ENCODE measurements at regions of chr4 and their contacts with region 1.

Region 1: GRCh38 chr4:90403781-90404180 is 276.6 kb downstream of the CCSER1 start:
- DNase-seq: no peak
- H3K4me3 ChIP-seq: no peak overlapping the region
- H3K27ac ChIP-seq: no peak overlapping the region
- H3K4me1 ChIP-seq: no peaks in the 10 kb centered on the region
- H3K27me3 ChIP-seq: no peaks in the 10 kb centered on the region
- CTCF ChIP-seq: no peak
- EP300 ChIP-seq: no peak
- RAD21 ChIP-seq: no peak

Region 2: GRCh38 chr4:90357117-90357710 is 46.6 kb before region 1 on chr4:
- CTCF ChIA-PET with region 1: no interaction called
- POLR2A ChIA-PET with region 1: no interaction called
- DNase-seq: peak; percentile 47
- H3K4me3 ChIP-seq: peak overlapping the region in 1 of 2 experiments; percentile 9; a peak in 1 of 4 replicates
- H3K27ac ChIP-seq: no peak overlapping the region
- H3K4me1 ChIP-seq: no peaks in the 10 kb centered on the region; a peak in 1 of 4 replicates
- H3K27me3 ChIP-seq: no peaks in the 10 kb centered on the region
- CTCF ChIP-seq: peak; percentile 78
- EP300 ChIP-seq: no peak
- RAD21 ChIP-seq: peak; percentile 94

Region 3: GRCh38 chr4:90419124-90419711 is 15.4 kb after region 1 on chr4:
- CTCF ChIA-PET with region 1: interaction called, 18 read pairs
- POLR2A ChIA-PET with region 1: no interaction called
- DNase-seq: peak; percentile 52
- H3K4me3 ChIP-seq: peak overlapping the region in 1 of 2 experiments; percentile 3; a peak in 1 of 4 replicates
- H3K27ac ChIP-seq: no peak overlapping the region
- H3K4me1 ChIP-seq: no peaks in the 10 kb centered on the region; a peak in 1 of 4 replicates
- H3K27me3 ChIP-seq: no peaks in the 10 kb centered on the region
- CTCF ChIP-seq: peak; percentile 77
- EP300 ChIP-seq: no peak
- RAD21 ChIP-seq: peak; percentile 89

Measured in SK-N-SH (cell line).